Cardiac septum (tissue), 1 donor: ENCODE measurements at regions of chr3 and their contacts with region 1.

Region 1: GRCh38 chr3:40292637-40293349 is 16.7 kb upstream of the EIF1B start:
- DNase-seq: no peak

Region 2: GRCh38 chr3:40247714-40248454 is 44.9 kb before region 1 on chr3:
- intact Hi-C with region 1: loop called (anchors 5 kb)
- DNase-seq: no peak

Region 3: GRCh38 chr3:40557575-40558161 is 264.9 kb after region 1 on chr3:
- intact Hi-C with region 1: no loop called
- DNase-seq: no peak

Region 4: DNA sequence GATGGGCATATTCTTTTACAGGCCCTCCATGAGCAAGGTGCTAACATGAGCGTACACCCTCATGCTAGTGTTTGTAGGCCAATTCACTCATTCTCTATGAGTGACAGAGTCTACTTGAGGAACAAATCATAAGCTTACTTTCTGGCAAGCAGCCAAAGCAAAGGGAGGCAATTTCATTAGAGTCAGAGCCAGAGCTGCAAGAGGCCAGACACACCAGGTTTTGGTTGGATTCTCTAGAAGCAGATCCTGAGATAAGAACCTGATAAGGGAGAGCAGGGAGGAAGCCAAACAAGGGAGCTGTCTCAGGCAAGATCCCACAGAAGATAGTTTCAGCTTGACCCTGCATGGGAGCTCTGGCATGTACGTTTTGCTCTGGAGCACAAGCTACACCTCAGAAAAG is 692.4 kb after region 1 on chr3:
- intact Hi-C with region 1: no loop called
- DNase-seq: no peak